ENCODE measurements at regions of chr11 and their contacts with region 1.

Region 1: GRCh38 chr11:3037040-3037944 is 19.9 kb downstream of the CARS1 start:
- DNase-seq: peak; percentile 84
- H3K4me3 Mint-ChIP-seq: no peak overlapping the region
- H3K27ac Mint-ChIP-seq: no peak overlapping the region
- H3K4me1 Mint-ChIP-seq: peaks cover 19% of the 10 kb centered on the region
- H3K27me3 Mint-ChIP-seq: no peaks in the 10 kb centered on the region
- CTCF ChIP-seq: peak; percentile 88

Region 2: GRCh38 chr11:2750682-2751387 is 286.5 kb before region 1 on chr11:
- CTCF ChIA-PET with region 1: no interaction called
- POLR2A ChIA-PET with region 1: no interaction called
- intact Hi-C with region 1: no loop called
- DNase-seq: no peak
- H3K4me3 Mint-ChIP-seq: no peak overlapping the region
- H3K27ac Mint-ChIP-seq: no peak overlapping the region
- H3K4me1 Mint-ChIP-seq: peaks cover 5% of the 10 kb centered on the region
- H3K27me3 Mint-ChIP-seq: no peaks in the 10 kb centered on the region
- CTCF ChIP-seq: no peak

Region 3: DNA sequence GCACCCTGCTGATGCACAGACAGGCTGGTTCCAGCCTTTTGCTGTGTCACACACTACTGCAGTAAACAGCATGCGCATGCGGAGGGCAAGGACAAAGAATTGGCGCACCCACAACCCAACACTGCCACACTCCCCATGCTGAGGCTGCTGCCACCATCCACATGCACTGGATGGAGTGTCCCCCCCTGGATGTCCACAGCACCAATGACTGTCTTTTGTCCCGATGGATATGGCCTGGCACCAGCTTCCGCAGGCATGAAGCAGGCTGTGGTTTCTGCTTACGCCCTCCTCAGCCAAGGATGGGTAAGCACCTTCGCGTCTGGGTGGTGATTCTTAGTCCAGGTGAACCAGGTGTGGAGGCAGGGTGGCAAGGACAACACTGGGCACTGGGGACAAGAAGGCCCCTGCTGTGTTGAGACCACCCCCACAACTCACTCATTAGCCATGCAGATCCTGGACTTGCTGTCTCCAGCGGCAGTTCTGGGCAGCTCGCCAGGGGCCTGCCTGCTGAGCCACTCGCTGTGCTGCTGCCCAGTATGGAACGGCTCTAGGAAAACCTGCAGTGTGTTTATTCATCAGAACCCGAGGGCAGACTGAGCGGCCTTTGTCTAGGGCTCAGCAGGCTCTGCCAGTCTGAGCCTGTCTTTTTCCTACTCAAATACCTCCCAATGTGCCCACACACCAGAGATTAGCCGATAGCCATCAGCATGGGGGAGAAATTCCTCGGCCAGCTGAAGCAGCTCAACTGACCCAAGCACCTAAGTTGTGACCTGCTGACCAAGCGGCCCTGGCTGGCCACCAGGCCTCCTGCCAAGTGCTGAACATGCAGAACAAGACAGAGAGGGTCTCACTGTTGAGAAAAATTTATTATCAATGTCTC is 37.0 kb before region 1 on chr11:
- CTCF ChIA-PET with region 1: interaction called, 12 read pairs
- POLR2A ChIA-PET with region 1: interaction called, 3 read pairs
- intact Hi-C with region 1: no loop called
- DNase-seq: peak; percentile 90
- H3K4me3 Mint-ChIP-seq: no peak overlapping the region
- H3K27ac Mint-ChIP-seq: peak overlapping the region; percentile 52
- H3K4me1 Mint-ChIP-seq: peaks cover 42% of the 10 kb centered on the region
- H3K27me3 Mint-ChIP-seq: no peaks in the 10 kb centered on the region
- CTCF ChIP-seq: no peak

Region 4: GRCh38 chr11:3021125-3021524 is 16.2 kb before region 1 on chr11:
- CTCF ChIA-PET with region 1: interaction called, 21 read pairs
- POLR2A ChIA-PET with region 1: interaction called, 3 read pairs
- intact Hi-C with region 1: no loop called
- DNase-seq: peak; percentile 62
- H3K4me3 Mint-ChIP-seq: no peak overlapping the region
- H3K27ac Mint-ChIP-seq: no peak overlapping the region
- H3K4me1 Mint-ChIP-seq: peaks cover 20% of the 10 kb centered on the region
- H3K27me3 Mint-ChIP-seq: no peaks in the 10 kb centered on the region
- CTCF ChIP-seq: peak; percentile 29

Region 5: DNA sequence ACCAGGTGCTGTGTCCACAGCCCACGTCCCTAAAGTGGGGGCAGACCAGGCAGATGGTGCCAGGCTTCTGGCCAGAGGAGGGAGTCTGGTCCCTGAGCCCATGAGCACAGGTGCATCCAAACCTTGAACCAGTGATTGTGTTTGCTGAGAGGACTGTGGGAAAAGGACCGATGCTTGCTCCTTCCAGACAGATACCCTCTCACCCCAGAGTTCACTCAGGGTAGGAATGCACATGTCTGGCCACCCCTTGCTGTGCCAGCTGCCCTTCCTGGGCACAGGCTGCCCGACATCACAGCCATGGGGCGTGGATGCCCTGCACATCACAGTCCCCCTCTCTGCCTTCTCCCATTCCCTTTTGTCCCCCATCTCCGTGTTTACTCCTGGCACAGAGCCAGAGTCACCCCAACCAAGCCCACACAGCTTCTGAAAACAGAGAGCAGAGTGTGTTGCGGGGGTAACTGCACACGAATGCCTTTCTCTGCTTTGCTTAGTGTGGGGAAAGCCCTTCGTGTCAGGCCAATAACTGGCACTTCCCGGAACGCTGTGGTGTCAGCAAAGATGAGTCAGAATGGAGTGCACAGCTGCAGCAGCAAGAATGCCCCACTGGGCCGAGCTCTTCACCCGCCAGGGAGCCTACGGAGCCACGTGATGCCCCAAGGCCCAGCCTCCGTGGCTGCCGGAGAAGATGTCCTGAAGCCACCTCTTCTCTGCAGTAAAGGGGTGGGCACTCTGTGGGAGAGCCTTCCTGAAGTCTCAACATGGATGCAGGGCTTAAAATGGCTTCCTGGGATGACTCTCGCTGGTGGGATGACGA is 12.3 kb after region 1 on chr11:
- CTCF ChIA-PET with region 1: interaction called, 113 read pairs
- POLR2A ChIA-PET with region 1: interaction called, 14 read pairs
- intact Hi-C with region 1: no loop called
- DNase-seq: peak; percentile 91
- H3K4me3 Mint-ChIP-seq: peak overlapping the region; percentile 63
- H3K27ac Mint-ChIP-seq: peak overlapping the region; percentile 95
- H3K4me1 Mint-ChIP-seq: peaks cover 19% of the 10 kb centered on the region
- H3K27me3 Mint-ChIP-seq: no peaks in the 10 kb centered on the region
- CTCF ChIP-seq: peak; percentile 26

Region 6: GRCh38 chr11:3086114-3086513 is 48.8 kb after region 1 on chr11:
- CTCF ChIA-PET with region 1: interaction called, 160 read pairs
- POLR2A ChIA-PET with region 1: interaction called, 14 read pairs
- intact Hi-C with region 1: loop called (anchors 1 kb)
- DNase-seq: no peak
- H3K4me3 Mint-ChIP-seq: no peak overlapping the region
- H3K27ac Mint-ChIP-seq: no peak overlapping the region
- H3K4me1 Mint-ChIP-seq: peaks cover 7% of the 10 kb centered on the region
- H3K27me3 Mint-ChIP-seq: peaks cover under 1% of the 10 kb centered on the region
- CTCF ChIP-seq: no peak

Region 7: GRCh38 chr11:3217676-3218482 is 180.6 kb after region 1 on chr11:
- CTCF ChIA-PET with region 1: interaction called, 27 read pairs
- POLR2A ChIA-PET with region 1: interaction called, 4 read pairs
- intact Hi-C with region 1: loop called (anchors 5 kb)
- DNase-seq: no peak
- H3K4me3 Mint-ChIP-seq: no peak overlapping the region
- H3K27ac Mint-ChIP-seq: no peak overlapping the region
- H3K4me1 Mint-ChIP-seq: peaks cover 18% of the 10 kb centered on the region
- H3K27me3 Mint-ChIP-seq: peaks cover 91% of the 10 kb centered on the region
- CTCF ChIP-seq: no peak

Measured in MCF 10A (cell line).